Sciatic nerve (tissue), 2 donors: ENCODE measurements at regions of chr3 and their contacts with region 1.

Region 1: DNA sequence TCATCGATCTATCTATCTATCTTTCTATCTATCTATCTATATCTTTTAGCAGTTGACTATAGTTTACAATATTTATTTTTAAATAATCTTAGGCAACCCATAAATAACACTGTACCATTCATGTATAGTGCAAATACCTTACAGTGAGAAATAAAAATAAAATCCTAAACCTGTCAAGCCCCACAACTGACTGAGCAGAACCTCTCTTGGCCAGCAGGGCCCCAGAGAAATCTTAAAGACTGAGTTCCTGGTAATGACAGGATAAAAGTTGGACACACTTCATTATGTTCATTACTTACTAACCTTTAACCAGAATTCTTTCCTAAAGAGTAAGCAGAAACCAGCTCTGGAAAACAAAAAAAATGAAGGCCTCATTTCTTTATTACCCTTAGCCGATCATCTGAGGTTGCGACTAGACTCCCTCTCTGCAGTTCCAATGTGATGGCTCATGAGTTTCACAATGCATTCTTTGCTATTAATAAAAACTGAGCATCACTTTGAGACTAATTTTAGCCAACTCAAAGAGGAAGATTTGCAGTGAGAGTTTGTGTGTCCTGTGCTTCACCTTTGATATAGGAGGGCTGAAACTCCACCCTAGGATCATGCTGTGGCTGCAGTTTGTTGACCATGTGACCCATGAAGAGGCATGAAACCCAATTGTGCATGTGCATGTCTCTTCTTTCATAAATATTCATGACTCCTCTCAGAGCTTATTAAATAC is 1072.0 kb downstream of the NSUN3 start:
- DNase-seq: no peak
- ATAC-seq: no peak

Region 2: GRCh38 chr3:94429517-94429916 is 705.3 kb before region 1 on chr3:
- intact Hi-C with region 1: loop called (anchors 5 kb)
- DNase-seq: no peak
- ATAC-seq: no peak

Region 3: GRCh38 chr3:95586754-95587153 is 451.9 kb after region 1 on chr3:
- intact Hi-C with region 1: no loop called
- DNase-seq: no peak
- ATAC-seq: no peak